Caco-2 (cell line): ENCODE measurements at regions of chr14 and their contacts with region 1.

Region 1: DNA sequence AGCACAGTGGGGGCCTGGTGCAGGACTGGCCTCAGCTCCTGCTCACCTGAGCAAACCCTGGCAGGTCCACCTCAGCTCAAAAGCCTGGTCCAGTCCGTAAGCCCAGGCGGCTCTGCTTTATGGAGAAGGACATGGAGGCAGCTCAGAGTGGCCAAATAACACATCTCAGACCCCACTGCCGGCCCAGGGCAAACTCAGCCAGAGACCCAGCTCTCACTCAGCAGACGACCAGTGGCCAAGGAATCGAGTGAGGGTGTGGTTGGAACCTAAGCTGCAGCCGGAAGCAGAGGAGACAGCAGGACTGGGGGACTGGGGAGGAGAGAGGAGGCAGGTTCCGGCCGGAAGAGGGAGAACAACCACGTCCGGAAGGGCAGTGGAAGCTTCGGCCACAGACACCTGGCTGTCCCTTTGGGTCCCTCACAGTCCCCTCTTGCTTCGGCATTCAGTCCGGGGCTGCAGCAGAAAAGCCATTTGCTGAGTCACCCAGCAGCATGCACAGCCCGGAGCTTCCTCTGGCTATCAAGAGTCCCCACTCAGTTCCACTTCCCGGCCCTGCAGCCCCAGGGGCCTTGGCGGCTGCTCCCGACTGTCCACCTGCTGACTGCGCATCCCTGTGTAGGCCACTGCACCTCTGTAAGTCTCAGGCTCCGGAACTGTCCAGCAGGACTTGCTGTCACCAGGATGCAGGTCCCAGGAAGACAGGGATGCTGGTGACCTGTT is 104.0 kb downstream of the CALM1 start:
- DNase-seq: no peak
- H3K4me3 ChIP-seq: no peak overlapping the region
- H3K4me3 Mint-ChIP-seq: no peak overlapping the region
- H3K27ac Mint-ChIP-seq: peak overlapping the region; percentile 96
- H3K4me1 ChIP-seq: peaks cover 58% of the 10 kb centered on the region
- H3K4me1 Mint-ChIP-seq: peaks cover 34% of the 10 kb centered on the region
- H3K27me3 ChIP-seq: no peaks in the 10 kb centered on the region
- H3K27me3 Mint-ChIP-seq: no peaks in the 10 kb centered on the region
- CTCF ChIP-seq: no peak

Region 2: GRCh38 chr14:90331497-90332435 is 169.0 kb before region 1 on chr14 and contains the start of gene NRDE2:
- CTCF ChIA-PET with region 1: no interaction called
- POLR2A ChIA-PET with region 1: no interaction called
- intact Hi-C with region 1: loop called (anchors 2 kb)
- DNase-seq: peak; percentile 99
- H3K4me3 ChIP-seq: peak within 1 kb of the TSS; percentile 37
- H3K4me3 Mint-ChIP-seq: peak within 1 kb of the TSS; percentile 91
- H3K27ac Mint-ChIP-seq: peak within 1 kb of the TSS; percentile 95
- H3K4me1 ChIP-seq: peaks cover 18% of the 10 kb centered on the region
- H3K4me1 Mint-ChIP-seq: peaks cover 16% of the 10 kb centered on the region
- H3K27me3 ChIP-seq: no peaks in the 10 kb centered on the region
- H3K27me3 Mint-ChIP-seq: no peaks in the 10 kb centered on the region
- CTCF ChIP-seq: no peak
- total RNA-seq, gene NRDE2: 17.1 and 18.0 TPM in 2 replicates

Region 3: GRCh38 chr14:90475298-90475697 is 25.5 kb before region 1 on chr14:
- CTCF ChIA-PET with region 1: no interaction called
- POLR2A ChIA-PET with region 1: no interaction called
- intact Hi-C with region 1: no loop called
- DNase-seq: no peak
- H3K4me3 ChIP-seq: no peak overlapping the region
- H3K4me3 Mint-ChIP-seq: no peak overlapping the region
- H3K27ac Mint-ChIP-seq: no peak overlapping the region
- H3K4me1 ChIP-seq: peaks cover 8% of the 10 kb centered on the region; the same call in 1 of the 2 replicates
- H3K4me1 Mint-ChIP-seq: peaks cover 8% of the 10 kb centered on the region
- H3K27me3 ChIP-seq: no peaks in the 10 kb centered on the region
- H3K27me3 Mint-ChIP-seq: no peaks in the 10 kb centered on the region
- CTCF ChIP-seq: no peak

Region 4: DNA sequence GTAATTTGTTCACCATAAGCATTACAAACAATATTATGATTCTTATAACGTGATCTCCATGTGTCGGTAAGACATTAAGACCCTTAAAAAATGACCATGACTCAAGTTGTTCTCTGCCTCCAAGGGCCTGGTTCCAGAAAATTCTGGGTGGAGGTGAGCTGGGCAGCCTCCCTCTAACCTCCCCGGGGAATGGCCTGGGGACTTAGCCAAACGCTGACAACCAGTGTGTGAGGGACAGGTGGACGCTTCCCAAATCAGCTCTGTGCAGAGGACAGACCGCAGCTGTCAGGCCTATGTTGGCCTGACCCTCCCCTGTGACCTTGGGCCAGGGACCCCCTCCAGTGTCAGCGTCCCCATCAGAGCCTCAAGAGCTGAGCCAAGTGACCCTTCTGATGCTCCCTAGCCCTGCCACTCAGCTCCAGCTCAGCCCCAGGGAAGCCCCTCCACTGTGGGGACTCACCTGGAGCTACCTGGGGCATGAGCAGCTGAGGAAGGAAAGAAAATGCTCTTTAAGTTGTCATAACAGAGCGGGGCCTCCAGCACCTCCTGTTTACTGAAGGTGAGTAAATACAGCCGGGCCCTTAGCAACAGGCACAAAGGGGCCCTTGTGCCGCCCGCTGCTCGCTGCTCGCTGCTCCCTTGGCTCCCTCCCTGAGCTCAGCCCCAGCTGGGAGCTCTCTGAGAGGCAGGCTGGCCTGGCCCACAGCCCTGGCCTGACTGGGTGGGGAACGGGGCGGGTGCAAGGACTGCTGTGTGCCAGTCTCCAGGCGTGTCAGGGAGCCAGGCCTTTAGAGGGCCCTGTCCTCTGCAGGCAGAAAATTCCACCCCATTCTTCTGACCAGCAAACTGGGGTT is 12.6 kb after region 1 on chr14:
- CTCF ChIA-PET with region 1: interaction called, 9 read pairs
- POLR2A ChIA-PET with region 1: interaction called, 12 read pairs
- intact Hi-C with region 1: loop called (anchors 1 kb)
- DNase-seq: peak; percentile 89 to 91
- H3K4me3 ChIP-seq: peak overlapping the region; percentile 8; the same call in 1 of the 2 replicates
- H3K4me3 Mint-ChIP-seq: peak overlapping the region; percentile 69
- H3K27ac Mint-ChIP-seq: peak overlapping the region; percentile 99
- H3K4me1 ChIP-seq: peaks cover 99% of the 10 kb centered on the region
- H3K4me1 Mint-ChIP-seq: peaks cover 46% of the 10 kb centered on the region
- H3K27me3 ChIP-seq: no peaks in the 10 kb centered on the region
- H3K27me3 Mint-ChIP-seq: no peaks in the 10 kb centered on the region
- CTCF ChIP-seq: no peak

Region 5: GRCh38 chr14:90671382-90672234 is 170.8 kb after region 1 on chr14:
- CTCF ChIA-PET with region 1: no interaction called
- POLR2A ChIA-PET with region 1: no interaction called
- intact Hi-C with region 1: no loop called
- DNase-seq: no peak
- H3K4me3 ChIP-seq: no peak overlapping the region
- H3K4me3 Mint-ChIP-seq: no peak overlapping the region
- H3K27ac Mint-ChIP-seq: no peak overlapping the region
- H3K4me1 ChIP-seq: no peaks in the 10 kb centered on the region
- H3K4me1 Mint-ChIP-seq: no peaks in the 10 kb centered on the region
- H3K27me3 ChIP-seq: no peaks in the 10 kb centered on the region; the same call in 1 of the 2 replicates
- H3K27me3 Mint-ChIP-seq: no peaks in the 10 kb centered on the region
- CTCF ChIP-seq: no peak